ENCODE measurements at regions of chr17 and their contacts with region 1.

Region 1: GRCh38 chr17:43393944-43394482 is 4.8 kb upstream of the ARL4D start:
- DNase-seq: peak; percentile 92
- ATAC-seq: peak; percentile 84
- H3K4me3 ChIP-seq: no peak overlapping the region
- H3K27ac ChIP-seq: no peak overlapping the region
- H3K4me1 ChIP-seq: no peaks in the 10 kb centered on the region
- H3K27me3 ChIP-seq: no peaks in the 10 kb centered on the region

Region 2: DNA sequence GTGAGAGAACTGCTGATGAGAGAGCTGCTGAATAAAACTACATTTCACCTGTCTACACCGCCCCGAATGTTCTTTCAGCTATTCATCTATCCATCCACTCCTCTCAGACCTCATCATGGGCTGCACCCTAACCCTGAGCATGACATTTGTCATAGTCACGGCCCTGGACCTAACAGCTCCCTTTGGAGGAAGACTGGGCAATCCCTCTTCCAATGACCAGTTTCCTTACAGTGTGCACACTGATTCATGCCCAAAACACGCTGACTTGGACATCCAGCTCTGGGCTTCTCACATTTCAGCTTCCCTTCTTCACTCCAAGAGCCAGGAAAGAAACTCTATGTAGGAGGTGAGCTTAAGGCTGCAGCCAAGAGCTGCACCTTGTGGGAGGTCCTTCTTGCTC is 37.0 kb before region 1 on chr17:
- intact Hi-C with region 1: loop called in 1 of 2 experiments (anchors 5 kb)
- DNase-seq: peak in 1 of 2 donors; percentile 65
- ATAC-seq: no peak
- H3K4me3 ChIP-seq: no peak overlapping the region
- H3K27ac ChIP-seq: no peak overlapping the region
- H3K4me1 ChIP-seq: peaks cover 0 to 2% of the 10 kb centered on the region in 2 donors
- H3K27me3 ChIP-seq: no peaks in the 10 kb centered on the region

Region 3: GRCh38 chr17:43431714-43432523 is 37.9 kb after region 1 on chr17:
- intact Hi-C with region 1: loop called in 1 of 2 experiments (anchors 2 kb)
- DNase-seq: no peak
- ATAC-seq: peak; percentile 71
- H3K4me3 ChIP-seq: no peak overlapping the region
- H3K27ac ChIP-seq: no peak overlapping the region
- H3K4me1 ChIP-seq: peaks cover 0 to 5% of the 10 kb centered on the region in 2 donors
- H3K27me3 ChIP-seq: no peaks in the 10 kb centered on the region

Region 4: GRCh38 chr17:43483674-43484372 is 89.8 kb after region 1 on chr17 and contains the start of gene DHX8:
- intact Hi-C with region 1: loop called (anchors 1 kb)
- DNase-seq: peak; percentile 98 to 99
- ATAC-seq: peak; percentile 100
- H3K4me3 ChIP-seq: peak within 1 kb of the TSS; percentile 73 to 85
- H3K27ac ChIP-seq: peak within 1 kb of the TSS in 1 of 2 donors; percentile 85
- H3K4me1 ChIP-seq: peaks cover 0 to 8% of the 10 kb centered on the region in 2 donors
- H3K27me3 ChIP-seq: no peaks in the 10 kb centered on the region
- total RNA-seq, gene DHX8: 42.7 to 45.3 TPM

Region 5: GRCh38 chr17:44344939-44345453 is 951.0 kb after region 1 on chr17 and contains the start of gene GRN:
- intact Hi-C with region 1: loop called in 1 of 2 experiments (anchors 10 kb)
- DNase-seq: peak; percentile 93 to 96
- ATAC-seq: peak; percentile 98
- H3K4me3 ChIP-seq: peak within 1 kb of the TSS; percentile 48 to 61
- H3K27ac ChIP-seq: peak within 1 kb of the TSS in 1 of 2 donors; percentile 60
- H3K4me1 ChIP-seq: peaks cover 0 to 3% of the 10 kb centered on the region in 2 donors
- H3K27me3 ChIP-seq: no peaks in the 10 kb centered on the region
- total RNA-seq, gene GRN: 162 to 248 TPM

Measured in aorta (tissue), 5 donors.